Posterior vena cava (tissue), 2 donors: ENCODE measurements at regions of chr9 and their contacts with region 1.

Region 1: GRCh38 chr9:6149315-6149714 is 66.3 kb upstream of the IL33 start:
- DNase-seq: no peak

Region 2: GRCh38 chr9:6186691-6187090 is 37.4 kb after region 1 on chr9:
- intact Hi-C with region 1: loop called in 1 of 2 experiments (anchors 2 kb)
- DNase-seq: no peak